ENCODE measurements at regions of chr11 and their contacts with region 1.

Region 1: DNA sequence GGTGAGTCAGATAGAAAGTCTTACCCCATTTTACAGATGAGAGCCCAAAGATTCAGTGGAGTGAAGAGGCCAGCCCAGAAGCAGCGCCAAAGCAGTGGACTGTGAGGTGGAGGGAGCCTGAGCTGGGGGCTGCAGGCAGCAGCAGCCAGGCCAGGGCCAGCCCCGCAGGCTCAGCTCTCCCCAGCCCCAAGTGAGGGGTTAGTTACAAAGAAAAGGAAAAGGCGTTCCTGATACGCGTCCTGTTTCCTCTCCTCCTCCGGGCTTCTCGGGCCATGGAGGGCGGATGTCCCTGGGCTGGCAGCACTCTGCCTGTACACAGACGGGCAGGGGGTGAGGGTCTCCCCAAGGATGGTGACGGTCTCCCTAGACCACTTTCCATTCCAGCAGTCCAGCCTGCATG is 44.9 kb downstream of the ARRB1 start:
- DNase-seq: peak; percentile 51
- H3K4me3 ChIP-seq: peak overlapping the region in 1 of 3 experiments; percentile 16
- H3K27ac ChIP-seq: peak overlapping the region; percentile 50
- H3K4me1 ChIP-seq: peaks cover 24% of the 10 kb centered on the region
- H3K27me3 ChIP-seq: no peaks in the 10 kb centered on the region
- CTCF ChIP-seq: no peak
- POLR2A ChIP-seq: no peak

Region 2: GRCh38 chr11:75293903-75294302 is 12.6 kb before region 1 on chr11:
- CTCF ChIA-PET with region 1: interaction called, 3 read pairs
- POLR2A ChIA-PET with region 1: no interaction called
- dilution Hi-C with region 1: no loop called
- intact Hi-C with region 1: loop called (anchors 2 kb)
- DNase-seq: no peak
- H3K4me3 ChIP-seq: no peak overlapping the region
- H3K27ac ChIP-seq: no peak overlapping the region
- H3K4me1 ChIP-seq: peaks cover 15% of the 10 kb centered on the region
- H3K27me3 ChIP-seq: no peaks in the 10 kb centered on the region
- CTCF ChIP-seq: no peak
- POLR2A ChIP-seq: no peak

Region 3: GRCh38 chr11:75319035-75319877 is 12.7 kb after region 1 on chr11:
- CTCF ChIA-PET with region 1: no interaction called
- POLR2A ChIA-PET with region 1: no interaction called
- dilution Hi-C with region 1: no loop called
- intact Hi-C with region 1: no loop called
- DNase-seq: no peak
- H3K4me3 ChIP-seq: no peak overlapping the region
- H3K27ac ChIP-seq: no peak overlapping the region
- H3K4me1 ChIP-seq: peaks cover 13% of the 10 kb centered on the region
- H3K27me3 ChIP-seq: no peaks in the 10 kb centered on the region
- CTCF ChIP-seq: no peak
- POLR2A ChIP-seq: no peak

Measured in endothelial cell of umbilical vein (primary cell).